Naive thymus-derived CD4-positive, alpha-beta T cell (primary cell): ENCODE measurements at regions of chr13 and their contacts with region 1.

Region 1: GRCh38 chr13:51583875-51584730 is at the start of gene WDFY2:
- DNase-seq: peak; percentile 99 to 100 (median 100)
- ATAC-seq: peak; percentile 92
- H3K4me3 ChIP-seq: peak within 1 kb of the TSS; percentile 95
- H3K4me3 Mint-ChIP-seq: peak within 1 kb of the TSS; percentile 85 to 100 (median 98)
- H3K27ac ChIP-seq: peak within 1 kb of the TSS; percentile 88
- H3K27ac Mint-ChIP-seq: peak within 1 kb of the TSS; percentile 95 to 100 (median 98)
- H3K4me1 ChIP-seq: peaks cover 12 to 17% of the 10 kb centered on the region in 2 donors
- H3K4me1 Mint-ChIP-seq: peaks cover 26 to 47% (median 35%) of the 10 kb centered on the region in 7 donors
- H3K27me3 ChIP-seq: no peaks in the 10 kb centered on the region
- H3K27me3 Mint-ChIP-seq: peaks cover 0 to 3% (median 0%) of the 10 kb centered on the region in 5 donors
- total RNA-seq, gene WDFY2: 13.3 to 44.3 (median 21.1) TPM

Region 2: GRCh38 chr13:50081679-50082425 is 1502.3 kb before region 1 on chr13:
- CTCF ChIA-PET with region 1: no interaction called
- POLR2A ChIA-PET with region 1: no interaction called
- intact Hi-C with region 1: loop called (anchors 5 kb)
- DNase-seq: peak; percentile 94 to 99 (median 99)
- ATAC-seq: peak; percentile 88
- H3K4me3 ChIP-seq: peak overlapping the region; percentile 63
- H3K4me3 Mint-ChIP-seq: peak overlapping the region; percentile 90 to 100 (median 95)
- H3K27ac ChIP-seq: peak overlapping the region; percentile 86
- H3K27ac Mint-ChIP-seq: peak overlapping the region; percentile 88 to 99 (median 94)
- H3K4me1 ChIP-seq: peaks cover 17% of the 10 kb centered on the region in 2 donors
- H3K4me1 Mint-ChIP-seq: peaks cover 13 to 63% (median 49%) of the 10 kb centered on the region in 7 donors
- H3K27me3 ChIP-seq: peaks cover 0 to 8% of the 10 kb centered on the region in 2 donors
- H3K27me3 Mint-ChIP-seq: peaks cover 0 to 11% (median 7%) of the 10 kb centered on the region in 5 donors

Region 3: DNA sequence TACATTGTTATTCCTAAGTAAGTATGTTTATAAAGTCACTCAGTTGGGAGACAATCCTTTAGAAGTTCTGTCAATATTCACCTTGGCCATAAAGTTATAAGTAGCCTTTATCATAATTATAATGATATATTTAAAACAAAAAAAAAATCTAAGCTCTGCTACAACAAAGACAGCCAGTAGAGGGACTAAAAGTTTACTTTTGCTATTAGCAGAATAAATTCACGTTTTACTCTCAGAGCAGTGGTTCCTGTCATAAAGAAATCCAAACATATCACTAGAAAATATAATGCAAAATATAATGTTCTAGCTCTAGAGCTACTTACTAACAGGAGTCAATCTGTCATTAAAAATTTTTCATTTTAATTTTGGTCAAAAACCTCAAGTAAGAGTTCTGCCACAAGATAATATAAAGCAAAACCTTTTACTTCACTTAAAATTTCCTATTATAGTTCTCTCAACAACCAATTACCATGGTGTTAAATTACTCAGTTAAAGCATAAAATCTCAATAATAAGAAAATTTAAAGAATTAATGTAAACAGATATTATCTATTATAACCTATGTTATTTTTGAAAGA is 149.0 kb before region 1 on chr13:
- CTCF ChIA-PET with region 1: interaction called, 4 read pairs
- POLR2A ChIA-PET with region 1: interaction called, 3 read pairs
- intact Hi-C with region 1: loop called in 1 of 2 experiments (anchors 1 kb)
- DNase-seq: peak in 6 of 9 donors; percentile 19 to 50 (median 33)
- ATAC-seq: peak; percentile 47
- H3K4me3 ChIP-seq: no peak overlapping the region
- H3K4me3 Mint-ChIP-seq: no peak overlapping the region
- H3K27ac ChIP-seq: no peak overlapping the region
- H3K27ac Mint-ChIP-seq: peak overlapping the region in 1 of 9 donors; percentile 61
- H3K4me1 ChIP-seq: no peaks in the 10 kb centered on the region
- H3K4me1 Mint-ChIP-seq: peaks cover 8 to 47% (median 25%) of the 10 kb centered on the region in 7 donors
- H3K27me3 ChIP-seq: no peaks in the 10 kb centered on the region
- H3K27me3 Mint-ChIP-seq: no peaks in the 10 kb centered on the region

Region 4: DNA sequence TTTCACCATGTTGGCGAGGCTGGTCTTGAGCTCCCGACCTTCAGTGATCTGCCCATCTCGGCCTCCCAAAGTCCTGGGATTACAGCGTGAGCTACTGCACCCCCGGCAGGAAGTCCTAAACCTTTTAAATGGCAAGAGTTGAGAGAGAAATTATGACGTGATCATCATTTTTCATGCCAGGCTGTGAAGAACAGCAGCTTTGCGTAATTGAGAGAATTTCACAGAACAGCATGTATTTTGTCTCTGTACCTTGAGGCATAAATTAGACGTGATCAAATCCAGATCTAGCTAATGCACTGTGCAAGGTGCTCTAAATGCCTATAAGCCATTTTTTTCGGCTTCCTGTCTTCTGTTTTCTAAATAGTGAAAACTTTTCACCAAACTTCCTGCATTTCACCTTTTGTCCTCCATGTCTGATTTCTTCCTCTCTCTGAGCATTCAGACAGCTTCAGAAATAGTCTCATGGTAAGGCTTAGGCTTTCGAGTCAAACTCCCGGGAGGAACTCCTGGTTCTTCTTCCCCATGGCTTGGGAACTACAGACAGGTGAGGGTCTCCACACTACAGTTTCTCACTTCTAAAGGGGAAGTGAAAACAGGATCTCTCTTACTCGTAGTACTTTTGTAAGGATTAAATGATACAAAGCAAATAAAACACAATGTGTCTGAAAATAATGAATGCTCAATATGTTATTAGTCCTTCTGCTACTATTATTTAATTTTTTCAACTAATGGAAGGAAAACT is 51.2 kb after region 1 on chr13:
- CTCF ChIA-PET with region 1: no interaction called
- POLR2A ChIA-PET with region 1: no interaction called
- intact Hi-C with region 1: loop called in 1 of 2 experiments (anchors 2 kb)
- DNase-seq: peak in 6 of 9 donors; percentile 25 to 49 (median 44)
- ATAC-seq: peak; percentile 57
- H3K4me3 ChIP-seq: no peak overlapping the region
- H3K4me3 Mint-ChIP-seq: peak overlapping the region; percentile 48 to 81 (median 74)
- H3K27ac ChIP-seq: peak overlapping the region; percentile 48
- H3K27ac Mint-ChIP-seq: peak overlapping the region; percentile 69 to 95 (median 89)
- H3K4me1 ChIP-seq: no peaks in the 10 kb centered on the region
- H3K4me1 Mint-ChIP-seq: peaks cover 22 to 74% (median 57%) of the 10 kb centered on the region in 7 donors
- H3K27me3 ChIP-seq: no peaks in the 10 kb centered on the region
- H3K27me3 Mint-ChIP-seq: no peaks in the 10 kb centered on the region

Region 5: DNA sequence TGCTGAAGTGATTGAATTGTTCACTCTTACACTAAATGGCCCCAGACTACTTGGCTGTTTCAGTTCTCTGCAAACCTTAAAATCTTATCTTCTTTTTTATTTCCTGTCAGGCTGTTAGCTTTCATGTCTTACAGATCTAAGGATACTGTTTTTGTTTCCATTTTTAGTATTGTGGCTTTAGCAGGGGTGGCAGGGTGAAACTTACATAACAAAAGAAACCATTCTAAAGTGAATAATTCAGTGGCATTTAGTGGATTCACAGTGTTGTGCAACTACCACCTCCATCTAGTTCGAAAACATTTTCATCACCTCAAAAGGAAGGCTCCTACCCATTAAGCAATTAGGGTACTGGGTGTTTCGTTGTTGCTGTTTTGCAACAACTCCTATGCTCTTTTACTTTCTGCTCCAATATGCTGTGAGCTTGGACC is 241.1 kb after region 1 on chr13:
- CTCF ChIA-PET with region 1: no interaction called
- POLR2A ChIA-PET with region 1: interaction called, 5 read pairs
- intact Hi-C with region 1: loop called in 1 of 2 experiments (anchors 1 kb)
- DNase-seq: peak in 7 of 9 donors; percentile 62 to 90 (median 84)
- ATAC-seq: peak; percentile 81
- H3K4me3 ChIP-seq: peak overlapping the region; percentile 75
- H3K4me3 Mint-ChIP-seq: peak overlapping the region; percentile 62 to 100 (median 97)
- H3K27ac ChIP-seq: peak overlapping the region; percentile 85
- H3K27ac Mint-ChIP-seq: peak overlapping the region; percentile 86 to 99 (median 95)
- H3K4me1 ChIP-seq: peaks cover 61 to 78% of the 10 kb centered on the region in 2 donors
- H3K4me1 Mint-ChIP-seq: peaks cover 57 to 80% (median 63%) of the 10 kb centered on the region in 7 donors
- H3K27me3 ChIP-seq: no peaks in the 10 kb centered on the region
- H3K27me3 Mint-ChIP-seq: peaks cover 0 to 10% (median 0%) of the 10 kb centered on the region in 5 donors

Region 6: DNA sequence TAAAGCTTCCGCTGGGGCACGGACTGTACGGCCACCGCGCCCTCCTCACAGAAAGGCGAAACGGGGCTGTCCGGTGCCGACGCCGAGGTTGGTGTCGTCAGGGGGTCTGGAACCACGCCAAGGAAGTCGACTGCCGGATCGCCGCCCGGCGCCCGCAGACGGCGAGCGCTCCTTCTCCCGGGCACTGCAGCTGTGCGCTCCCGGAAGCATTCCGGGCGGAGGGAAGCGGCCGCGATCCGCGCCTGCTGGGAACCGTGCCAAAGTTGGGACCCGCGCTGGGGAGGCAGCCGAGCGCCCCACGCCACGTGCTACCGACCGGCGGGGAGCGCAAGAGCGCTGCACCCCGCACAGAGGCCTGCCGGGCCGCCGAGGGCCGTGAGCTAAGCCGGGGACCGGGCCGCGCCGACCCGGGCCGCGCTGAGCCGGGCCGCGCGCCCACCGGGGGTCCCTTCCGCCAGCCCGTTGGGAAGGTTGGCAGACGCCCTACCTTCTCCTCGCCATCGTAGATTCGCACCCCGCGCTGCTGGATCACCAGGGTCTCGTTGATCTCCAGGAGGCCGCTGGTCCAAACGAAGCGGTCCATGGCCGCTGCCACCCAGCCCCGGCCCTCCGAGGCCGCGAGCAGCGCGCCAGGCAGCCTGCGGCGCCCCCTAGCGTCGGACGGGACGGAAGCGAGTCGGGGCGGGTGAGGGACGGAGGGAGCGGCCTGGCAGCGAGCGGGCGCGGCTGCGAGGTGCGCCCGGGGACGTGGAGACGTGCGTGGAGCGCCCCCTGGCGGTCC is 866.1 kb after region 1 on chr13 and contains the start of gene VPS36:
- CTCF ChIA-PET with region 1: no interaction called
- POLR2A ChIA-PET with region 1: no interaction called
- intact Hi-C with region 1: loop called (anchors 1 to 2 kb)
- DNase-seq: peak; percentile 85 to 99 (median 95)
- ATAC-seq: peak; percentile 85
- H3K4me3 ChIP-seq: peak within 1 kb of the TSS; percentile 92
- H3K4me3 Mint-ChIP-seq: peak within 1 kb of the TSS; percentile 80 to 98 (median 94)
- H3K27ac ChIP-seq: peak within 1 kb of the TSS; percentile 88
- H3K27ac Mint-ChIP-seq: peak within 1 kb of the TSS; percentile 58 to 96 (median 90)
- H3K4me1 ChIP-seq: peaks cover 26 to 27% of the 10 kb centered on the region in 2 donors
- H3K4me1 Mint-ChIP-seq: peaks cover 17 to 52% (median 45%) of the 10 kb centered on the region in 7 donors
- H3K27me3 ChIP-seq: no peaks in the 10 kb centered on the region
- H3K27me3 Mint-ChIP-seq: peaks cover 0 to 3% (median 0%) of the 10 kb centered on the region in 5 donors
- total RNA-seq, gene VPS36: 40.4 to 53.7 (median 49.5) TPM